ENCODE measurements at regions of chr11 and their contacts with region 1.

Region 1: DNA sequence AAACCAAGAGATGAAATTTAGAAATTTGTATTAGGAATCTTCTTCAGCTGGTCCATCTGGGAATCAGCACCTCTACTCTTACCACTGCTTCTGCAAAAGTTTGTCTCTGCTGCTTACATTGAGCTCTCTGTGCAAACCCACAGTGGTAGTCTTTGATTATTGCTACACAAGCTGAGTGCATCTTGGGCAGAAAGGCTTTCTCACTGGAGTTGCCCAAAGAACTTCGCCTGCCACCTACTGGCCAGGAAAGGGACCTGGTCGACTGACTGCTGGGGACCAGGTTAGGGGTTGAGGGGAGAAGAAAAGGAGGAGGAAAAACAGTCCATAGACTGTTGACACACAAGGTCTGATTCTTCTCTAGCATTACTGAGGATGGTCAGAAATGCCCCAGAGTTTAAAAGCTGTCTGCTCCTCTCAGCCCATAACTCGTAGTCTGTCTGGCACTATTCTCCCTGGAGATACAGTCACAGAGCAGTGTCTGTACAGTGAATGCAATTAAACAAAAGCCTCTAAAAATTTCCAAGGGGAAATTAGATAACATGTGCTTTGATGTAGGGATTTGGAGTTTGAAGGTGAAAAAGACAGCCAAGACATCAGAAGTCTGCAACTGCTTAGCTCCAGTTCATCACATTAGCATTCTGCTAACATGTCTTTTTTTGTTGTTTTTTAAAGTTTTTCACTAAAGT is 215.0 kb upstream of the CTSC start:
- DNase-seq: peak; percentile 74
- ATAC-seq: peak; percentile 87
- H3K4me3 Mint-ChIP-seq: no peak overlapping the region
- H3K27ac Mint-ChIP-seq: no peak overlapping the region
- H3K4me1 Mint-ChIP-seq: no peaks in the 10 kb centered on the region
- H3K27me3 Mint-ChIP-seq: peaks cover 3% of the 10 kb centered on the region

Region 2: DNA sequence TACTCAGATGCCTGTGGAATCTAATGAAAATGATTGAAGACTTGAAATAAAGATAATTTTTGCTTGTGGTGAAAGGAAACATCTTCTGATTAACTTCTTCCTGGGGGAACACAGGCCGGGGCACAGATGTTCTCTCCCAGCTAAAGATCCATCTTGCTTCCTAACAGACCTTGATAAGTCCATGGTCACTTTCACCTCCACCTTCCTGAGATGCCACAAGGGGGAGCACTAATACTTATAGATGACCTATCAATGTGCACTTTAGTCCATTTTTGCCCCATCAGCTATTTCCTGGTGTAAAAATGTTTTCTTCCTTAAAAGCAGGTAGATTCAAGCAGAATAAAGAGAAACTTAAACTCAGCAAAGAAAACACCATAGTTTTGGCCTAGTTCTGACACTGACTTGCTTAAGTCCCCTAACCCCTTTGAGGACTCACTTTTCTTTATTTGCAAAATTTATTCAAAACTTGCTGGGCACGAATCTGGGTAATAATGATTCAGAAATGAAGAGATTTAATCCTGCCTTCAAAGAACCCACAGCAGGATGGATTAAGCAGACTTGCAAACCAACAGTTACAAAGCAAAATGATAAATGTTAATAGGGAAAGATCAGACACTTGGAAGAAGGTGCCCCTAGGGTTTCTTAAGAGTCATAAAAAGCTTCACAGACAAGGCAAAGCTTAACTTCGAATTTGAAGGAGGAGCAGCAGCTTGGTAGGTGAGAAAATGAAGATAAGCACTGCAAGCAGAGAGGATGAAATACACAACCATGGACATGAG is 535.9 kb before region 1 on chr11:
- CTCF ChIA-PET with region 1: interaction called, 48 read pairs
- POLR2A ChIA-PET with region 1: no interaction called
- DNase-seq: peak; percentile 74
- ATAC-seq: peak; percentile 78
- H3K4me3 Mint-ChIP-seq: no peak overlapping the region
- H3K27ac Mint-ChIP-seq: no peak overlapping the region
- H3K4me1 Mint-ChIP-seq: no peaks in the 10 kb centered on the region
- H3K27me3 Mint-ChIP-seq: no peaks in the 10 kb centered on the region

Region 3: GRCh38 chr11:88103337-88104206 is 448.9 kb before region 1 on chr11:
- CTCF ChIA-PET with region 1: interaction called, 11 read pairs
- POLR2A ChIA-PET with region 1: no interaction called
- DNase-seq: peak; percentile 54
- ATAC-seq: peak; percentile 76
- H3K4me3 Mint-ChIP-seq: no peak overlapping the region
- H3K27ac Mint-ChIP-seq: no peak overlapping the region
- H3K4me1 Mint-ChIP-seq: no peaks in the 10 kb centered on the region
- H3K27me3 Mint-ChIP-seq: peaks cover 24% of the 10 kb centered on the region

Region 4: GRCh38 chr11:88345408-88345807 is 207.1 kb before region 1 on chr11:
- CTCF ChIA-PET with region 1: no interaction called
- POLR2A ChIA-PET with region 1: no interaction called
- DNase-seq: peak; percentile 43
- ATAC-seq: peak; percentile 74
- H3K4me3 Mint-ChIP-seq: no peak overlapping the region
- H3K27ac Mint-ChIP-seq: peak overlapping the region; percentile 53
- H3K4me1 Mint-ChIP-seq: peaks cover 45% of the 10 kb centered on the region
- H3K27me3 Mint-ChIP-seq: no peaks in the 10 kb centered on the region

Region 5: GRCh38 chr11:88535916-88536547 is 16.5 kb before region 1 on chr11:
- CTCF ChIA-PET with region 1: interaction called, 23 read pairs
- POLR2A ChIA-PET with region 1: no interaction called
- DNase-seq: no peak
- ATAC-seq: no peak
- H3K4me3 Mint-ChIP-seq: no peak overlapping the region
- H3K27ac Mint-ChIP-seq: no peak overlapping the region
- H3K4me1 Mint-ChIP-seq: peaks cover 8% of the 10 kb centered on the region
- H3K27me3 Mint-ChIP-seq: peaks cover 6% of the 10 kb centered on the region